CD4-positive, alpha-beta memory T cell (primary cell): ENCODE measurements at regions of chr6 and their contacts with region 1.

Region 1: DNA sequence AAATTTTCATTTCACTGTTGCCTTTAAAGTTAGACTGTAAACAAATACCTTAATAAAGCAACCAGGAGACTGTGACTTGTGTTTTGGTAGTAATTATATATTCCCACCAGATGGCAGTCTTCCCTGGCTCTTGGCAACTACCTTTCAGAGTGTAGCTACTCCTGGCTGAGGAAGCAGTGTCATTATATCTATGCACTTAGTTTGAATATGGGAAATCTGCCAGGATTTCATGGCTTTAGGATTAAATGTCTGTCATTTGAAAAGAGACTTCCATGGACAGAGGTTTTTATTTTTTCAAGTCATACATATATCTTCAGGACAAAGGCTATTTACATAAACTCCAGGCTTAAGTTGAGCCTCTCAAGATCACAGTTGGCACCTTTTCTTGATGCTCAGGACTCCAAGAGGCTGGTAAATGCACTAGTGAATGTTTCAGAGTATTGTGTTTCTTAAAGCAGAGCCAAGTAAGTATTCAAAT is 160.1 kb downstream of the C6orf58 start:
- DNase-seq: peak; percentile 41 to 69 (median 64)
- H3K4me3 ChIP-seq: no peak overlapping the region
- H3K4me3 Mint-ChIP-seq: peak overlapping the region in 1 of 8 donors; percentile 48
- H3K27ac ChIP-seq: no peak overlapping the region
- H3K27ac Mint-ChIP-seq: peak overlapping the region in 6 of 7 donors; percentile 9 to 59 (median 52)
- H3K4me1 ChIP-seq: peaks cover 8% of the 10 kb centered on the region
- H3K4me1 Mint-ChIP-seq: peaks cover 33 to 59% (median 51%) of the 10 kb centered on the region in 4 donors
- H3K27me3 ChIP-seq: no peaks in the 10 kb centered on the region
- H3K27me3 Mint-ChIP-seq: no peaks in the 10 kb centered on the region

Region 2: DNA sequence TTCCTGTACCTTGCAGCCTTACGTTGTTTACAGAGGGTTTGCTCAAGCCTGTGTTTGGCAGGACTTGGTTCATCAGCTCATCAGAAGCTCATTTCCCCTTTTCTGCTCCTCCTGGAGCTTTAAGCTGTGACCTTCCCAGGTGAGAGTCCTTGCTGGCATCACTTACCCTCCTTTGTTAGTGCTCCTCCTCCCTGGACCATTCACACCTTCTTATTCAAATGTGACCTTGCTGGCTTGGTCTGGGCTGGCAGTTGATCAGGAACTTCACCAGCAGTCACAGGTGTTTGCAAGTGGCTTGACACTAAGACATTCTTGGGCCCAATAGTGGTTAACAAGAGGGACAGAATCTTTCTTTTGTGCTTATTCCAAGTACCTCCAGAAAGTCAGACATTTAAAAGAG is 11.2 kb before region 1 on chr6:
- CTCF ChIA-PET with region 1: interaction called, 13 read pairs
- POLR2A ChIA-PET with region 1: no interaction called
- intact Hi-C with region 1: no loop called
- DNase-seq: no peak
- H3K4me3 ChIP-seq: no peak overlapping the region
- H3K4me3 Mint-ChIP-seq: no peak overlapping the region
- H3K27ac ChIP-seq: no peak overlapping the region
- H3K27ac Mint-ChIP-seq: peak overlapping the region in 2 of 7 donors; percentile 25 to 72
- H3K4me1 ChIP-seq: peaks cover 4% of the 10 kb centered on the region
- H3K4me1 Mint-ChIP-seq: peaks cover 50 to 53% (median 52%) of the 10 kb centered on the region in 4 donors
- H3K27me3 ChIP-seq: no peaks in the 10 kb centered on the region
- H3K27me3 Mint-ChIP-seq: no peaks in the 10 kb centered on the region

Region 3: GRCh38 chr6:128327890-128328289 is 590.8 kb after region 1 on chr6:
- CTCF ChIA-PET with region 1: interaction called, 65 read pairs
- POLR2A ChIA-PET with region 1: interaction called, 4 read pairs
- intact Hi-C with region 1: loop called (anchors 1 kb)
- DNase-seq: peak; percentile 32 to 57 (median 50)
- H3K4me3 ChIP-seq: no peak overlapping the region
- H3K4me3 Mint-ChIP-seq: no peak overlapping the region
- H3K27ac ChIP-seq: no peak overlapping the region
- H3K27ac Mint-ChIP-seq: no peak overlapping the region
- H3K4me1 ChIP-seq: no peaks in the 10 kb centered on the region
- H3K4me1 Mint-ChIP-seq: peaks cover 0 to 2% (median 0%) of the 10 kb centered on the region in 4 donors
- H3K27me3 ChIP-seq: no peaks in the 10 kb centered on the region
- H3K27me3 Mint-ChIP-seq: no peaks in the 10 kb centered on the region

Region 4: GRCh38 chr6:128731249-128732165 is 994.5 kb after region 1 on chr6:
- CTCF ChIA-PET with region 1: interaction called, 8 read pairs
- POLR2A ChIA-PET with region 1: no interaction called
- intact Hi-C with region 1: loop called (anchors 1 kb)
- DNase-seq: no peak
- H3K4me3 ChIP-seq: no peak overlapping the region
- H3K4me3 Mint-ChIP-seq: no peak overlapping the region
- H3K27ac ChIP-seq: no peak overlapping the region
- H3K27ac Mint-ChIP-seq: no peak overlapping the region
- H3K4me1 ChIP-seq: no peaks in the 10 kb centered on the region
- H3K4me1 Mint-ChIP-seq: no peaks in the 10 kb centered on the region
- H3K27me3 ChIP-seq: no peaks in the 10 kb centered on the region
- H3K27me3 Mint-ChIP-seq: peaks cover 8 to 9% of the 10 kb centered on the region in 2 donors

Region 5: DNA sequence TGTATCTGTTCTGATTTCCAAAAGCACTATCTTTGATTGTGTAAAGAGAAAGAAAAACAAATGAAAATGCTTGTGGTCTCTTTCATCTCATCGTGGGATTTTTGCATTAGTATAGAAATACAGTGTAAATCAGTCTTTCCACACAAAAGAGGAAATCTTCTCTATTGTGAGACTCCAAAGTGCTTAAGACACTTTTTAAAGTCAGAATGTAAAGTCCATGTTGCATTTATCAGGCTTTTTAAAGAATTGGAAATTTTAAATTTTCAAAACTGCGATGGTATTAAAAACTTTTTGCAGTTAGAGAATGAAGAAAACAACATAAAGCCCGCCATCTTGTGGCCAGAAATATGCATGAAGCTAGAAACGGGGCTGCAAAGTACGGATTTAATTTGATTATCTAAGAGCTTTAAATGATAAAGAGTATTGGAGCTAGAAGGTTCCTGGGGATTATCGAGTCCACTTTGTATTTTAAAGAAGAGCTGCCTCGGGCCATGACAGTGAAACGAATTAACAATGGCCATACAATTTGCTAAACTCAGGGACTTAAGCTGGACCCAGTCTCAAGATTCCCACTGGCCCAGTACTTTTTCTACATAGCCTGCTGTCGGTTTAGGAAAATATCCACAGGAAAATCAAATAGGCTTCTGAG is 1633.3 kb after region 1 on chr6:
- CTCF ChIA-PET with region 1: no interaction called
- POLR2A ChIA-PET with region 1: no interaction called
- intact Hi-C with region 1: loop called (anchors 2 kb)
- DNase-seq: peak; percentile 39 to 51 (median 44)
- H3K4me3 ChIP-seq: no peak overlapping the region
- H3K4me3 Mint-ChIP-seq: peak overlapping the region in 6 of 8 donors; percentile 40 to 66 (median 48)
- H3K27ac ChIP-seq: no peak overlapping the region
- H3K27ac Mint-ChIP-seq: no peak overlapping the region
- H3K4me1 ChIP-seq: peaks cover 9% of the 10 kb centered on the region
- H3K4me1 Mint-ChIP-seq: peaks cover 5 to 17% (median 11%) of the 10 kb centered on the region in 4 donors
- H3K27me3 ChIP-seq: no peaks in the 10 kb centered on the region
- H3K27me3 Mint-ChIP-seq: no peaks in the 10 kb centered on the region